ENCODE measurements at regions of chr11 and their contacts with region 1.

Region 1: DNA sequence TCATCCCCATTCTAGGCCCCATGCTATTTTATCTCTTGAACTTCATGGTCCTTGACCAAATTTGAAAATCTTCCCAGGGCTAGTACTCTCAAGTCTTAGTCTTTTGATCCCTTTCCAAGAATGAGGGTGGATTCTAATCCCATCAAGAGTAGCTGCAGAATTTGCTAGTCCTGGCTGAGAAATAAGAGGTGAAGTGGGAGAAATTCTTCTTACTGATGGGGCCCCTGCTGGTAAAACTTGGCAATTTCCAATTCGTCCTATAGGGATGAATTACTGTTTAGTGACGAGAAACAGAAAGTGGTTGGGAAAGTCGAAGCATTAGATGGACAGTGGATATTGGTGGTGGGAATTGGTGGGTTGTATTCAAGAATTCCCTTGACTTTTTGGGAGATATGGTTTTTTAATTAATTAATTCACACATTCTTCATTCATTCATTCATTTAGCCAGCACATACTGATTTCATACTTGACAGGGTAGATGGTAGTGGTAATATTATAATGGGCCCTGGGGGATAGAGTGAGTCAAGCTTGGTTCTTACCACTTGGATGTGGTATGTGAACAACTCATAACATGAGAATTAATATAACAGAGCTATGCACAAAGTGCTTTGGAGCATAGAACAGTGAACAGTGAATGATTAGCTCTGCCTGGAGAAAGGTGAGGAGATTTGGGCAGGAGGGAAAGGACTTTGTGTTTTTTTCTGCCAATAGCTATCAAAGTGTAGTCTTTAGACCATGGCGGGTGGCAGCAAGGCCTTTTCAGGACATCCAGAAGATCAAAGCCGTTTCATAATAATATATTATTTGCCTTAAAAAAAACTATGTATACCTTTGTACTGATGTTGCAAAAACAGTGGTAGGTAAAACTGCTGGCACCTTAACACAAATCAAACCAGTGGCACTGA is 103.8 kb downstream of the STIM1 start:
- DNase-seq: no peak
- ATAC-seq: peak; percentile 89
- H3K4me3 ChIP-seq: no peak overlapping the region
- H3K27ac ChIP-seq: no peak overlapping the region
- H3K4me1 ChIP-seq: peaks cover 4% of the 10 kb centered on the region; the same call in 1 of the 2 replicates
- H3K27me3 ChIP-seq: no peaks in the 10 kb centered on the region
- CTCF ChIP-seq: peak; percentile 25 to 32 (median 30); a peak in 3 of 6 replicates
- EP300 ChIP-seq: no peak
- POLR2A ChIP-seq: no peak
- RAD21 ChIP-seq: peak; percentile 41; the same call in 1 of the 2 replicates

Region 2: DNA sequence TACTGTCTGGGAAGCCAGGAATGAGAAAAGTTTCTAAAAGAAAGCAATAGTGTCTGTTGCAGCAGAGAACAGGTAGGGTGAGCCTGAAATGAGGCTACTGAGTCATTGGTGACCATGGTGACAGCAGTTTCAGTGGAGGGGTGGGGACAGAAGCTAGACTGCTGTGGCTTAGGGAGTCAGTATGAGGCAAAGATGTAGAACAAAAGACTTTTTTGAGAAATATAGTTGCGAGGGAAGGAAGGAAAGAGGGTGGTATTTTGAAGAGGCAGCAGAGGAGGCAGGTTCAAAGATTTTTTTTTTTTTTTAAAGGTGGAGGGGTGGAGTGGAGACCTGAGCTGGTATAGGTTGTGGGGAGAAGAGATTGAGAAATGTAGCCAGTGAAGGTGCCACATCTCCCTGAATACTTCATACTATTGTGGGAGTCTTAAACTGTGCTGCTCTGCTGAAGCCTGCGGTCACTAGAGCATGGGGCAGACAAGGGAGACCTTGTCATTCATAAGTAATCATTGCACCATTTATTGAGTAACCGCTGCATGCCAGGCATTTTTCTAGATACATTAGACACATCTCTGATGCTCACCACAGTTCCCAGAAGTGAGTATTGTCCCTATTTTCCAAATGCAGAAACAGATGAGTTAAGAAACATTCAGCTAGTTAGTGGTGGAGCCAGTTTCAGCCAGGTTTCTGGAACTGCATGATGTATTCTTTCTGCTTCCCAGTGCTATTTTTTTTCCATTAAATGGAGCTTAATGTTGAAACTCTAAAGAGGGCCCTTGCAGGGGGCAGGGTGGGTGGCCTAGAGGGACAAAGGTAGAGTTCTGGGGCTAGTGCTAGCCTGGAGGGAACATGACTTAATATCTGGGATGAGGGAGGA is 54.0 kb before region 1 on chr11:
- CTCF ChIA-PET with region 1: interaction called, 3 read pairs
- POLR2A ChIA-PET with region 1: no interaction called
- RAD21 ChIA-PET with region 1: no interaction called
- SMC1A ChIA-PET with region 1: no interaction called
- in situ Hi-C with region 1: no loop called
- intact Hi-C with region 1: loop called (anchors 2 kb)
- DNase-seq: no peak
- ATAC-seq: peak; percentile 89
- H3K4me3 ChIP-seq: no peak overlapping the region
- H3K27ac ChIP-seq: no peak overlapping the region
- H3K4me1 ChIP-seq: peaks cover 51% of the 10 kb centered on the region
- H3K27me3 ChIP-seq: no peaks in the 10 kb centered on the region
- CTCF ChIP-seq: no peak
- EP300 ChIP-seq: no peak
- POLR2A ChIP-seq: no peak
- RAD21 ChIP-seq: no peak

Region 3: DNA sequence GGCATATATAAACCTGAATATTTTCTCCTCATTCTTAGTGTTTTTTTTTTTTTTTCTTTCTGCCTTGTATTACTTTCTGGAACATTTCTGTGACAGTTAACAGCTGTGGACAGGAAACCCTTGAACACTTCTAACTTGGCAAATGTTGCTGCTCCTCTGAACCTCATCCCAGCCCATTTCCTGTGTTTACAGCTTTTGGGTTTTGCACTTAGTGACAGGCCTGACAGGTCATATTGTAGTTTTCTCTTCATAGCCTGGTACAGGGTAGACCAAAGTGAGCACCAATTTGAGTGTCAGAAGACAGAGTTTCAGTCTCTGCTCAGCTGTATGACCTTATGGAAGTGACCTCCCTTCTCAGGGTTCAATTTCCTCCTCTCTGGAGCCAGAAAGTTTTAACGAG is 12.2 kb before region 1 on chr11:
- CTCF ChIA-PET with region 1: interaction called, 9 read pairs
- POLR2A ChIA-PET with region 1: no interaction called
- RAD21 ChIA-PET with region 1: interaction called, 12 read pairs
- SMC1A ChIA-PET with region 1: interaction called, 27 read pairs
- in situ Hi-C with region 1: no loop called
- intact Hi-C with region 1: no loop called
- DNase-seq: peak; percentile 76
- ATAC-seq: peak; percentile 78
- H3K4me3 ChIP-seq: 0 out of 2 replicates have a peak overlapping the region, but pooled peaks have one; percentile 19
- H3K27ac ChIP-seq: peak overlapping the region; percentile 52
- H3K4me1 ChIP-seq: peaks cover 55% of the 10 kb centered on the region
- H3K27me3 ChIP-seq: no peaks in the 10 kb centered on the region
- CTCF ChIP-seq: no peak
- EP300 ChIP-seq: no peak
- POLR2A ChIP-seq: no peak
- RAD21 ChIP-seq: no peak

Region 4: DNA sequence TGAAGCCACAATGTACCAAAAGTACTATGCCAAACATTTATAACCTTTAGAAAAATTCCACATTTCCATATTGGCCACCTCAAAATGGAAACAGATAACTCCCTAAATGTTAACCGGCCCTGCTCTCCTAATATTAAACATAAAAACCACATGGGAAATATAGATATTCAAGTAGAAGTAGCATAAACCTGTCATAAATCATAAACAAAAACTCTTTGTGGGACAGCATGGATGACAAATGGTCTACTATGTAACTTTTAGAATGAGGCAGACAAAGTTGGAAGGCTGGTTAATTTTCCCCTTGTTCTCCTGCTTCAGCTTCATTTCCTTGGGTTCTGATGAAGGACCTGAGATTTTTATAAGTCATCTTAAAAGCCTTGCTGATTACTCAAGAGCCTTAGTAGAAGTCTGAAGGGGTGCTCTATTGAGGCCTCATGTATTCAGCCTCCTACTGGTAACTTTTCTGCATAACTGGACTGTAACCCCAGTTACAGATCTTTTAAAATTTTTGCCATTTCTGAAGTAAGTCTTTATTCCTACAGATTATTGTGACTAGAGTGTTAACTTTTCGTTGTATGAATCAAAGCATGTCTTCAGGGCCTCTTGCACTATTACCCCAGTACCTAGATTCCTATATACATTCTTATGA is 12.6 kb after region 1 on chr11:
- CTCF ChIA-PET with region 1: interaction called, 14 read pairs
- POLR2A ChIA-PET with region 1: no interaction called
- RAD21 ChIA-PET with region 1: no interaction called
- SMC1A ChIA-PET with region 1: interaction called, 4 read pairs
- in situ Hi-C with region 1: no loop called
- intact Hi-C with region 1: no loop called
- DNase-seq: no peak
- ATAC-seq: peak; percentile 62
- H3K4me3 ChIP-seq: no peak overlapping the region
- H3K27ac ChIP-seq: no peak overlapping the region
- H3K4me1 ChIP-seq: peaks cover 4% of the 10 kb centered on the region; the same call in 1 of the 2 replicates
- H3K27me3 ChIP-seq: no peaks in the 10 kb centered on the region
- CTCF ChIP-seq: 0 out of 6 replicates have a peak, but pooled peaks of 1 of the 3 experiments have one; percentile 12
- EP300 ChIP-seq: no peak
- POLR2A ChIP-seq: no peak
- RAD21 ChIP-seq: no peak; the same call in 1 of the 2 replicates

Region 5: GRCh38 chr11:3995949-3996554 is 36.8 kb after region 1 on chr11:
- CTCF ChIA-PET with region 1: no interaction called
- POLR2A ChIA-PET with region 1: no interaction called
- RAD21 ChIA-PET with region 1: no interaction called
- SMC1A ChIA-PET with region 1: no interaction called
- in situ Hi-C with region 1: no loop called
- intact Hi-C with region 1: no loop called
- DNase-seq: no peak
- ATAC-seq: no peak
- H3K4me3 ChIP-seq: no peak overlapping the region
- H3K27ac ChIP-seq: no peak overlapping the region
- H3K4me1 ChIP-seq: no peaks in the 10 kb centered on the region
- H3K27me3 ChIP-seq: no peaks in the 10 kb centered on the region
- CTCF ChIP-seq: no peak
- EP300 ChIP-seq: no peak
- POLR2A ChIP-seq: no peak
- RAD21 ChIP-seq: no peak